ENCODE measurements at regions of chr14 and their contacts with region 1.

Region 1: DNA sequence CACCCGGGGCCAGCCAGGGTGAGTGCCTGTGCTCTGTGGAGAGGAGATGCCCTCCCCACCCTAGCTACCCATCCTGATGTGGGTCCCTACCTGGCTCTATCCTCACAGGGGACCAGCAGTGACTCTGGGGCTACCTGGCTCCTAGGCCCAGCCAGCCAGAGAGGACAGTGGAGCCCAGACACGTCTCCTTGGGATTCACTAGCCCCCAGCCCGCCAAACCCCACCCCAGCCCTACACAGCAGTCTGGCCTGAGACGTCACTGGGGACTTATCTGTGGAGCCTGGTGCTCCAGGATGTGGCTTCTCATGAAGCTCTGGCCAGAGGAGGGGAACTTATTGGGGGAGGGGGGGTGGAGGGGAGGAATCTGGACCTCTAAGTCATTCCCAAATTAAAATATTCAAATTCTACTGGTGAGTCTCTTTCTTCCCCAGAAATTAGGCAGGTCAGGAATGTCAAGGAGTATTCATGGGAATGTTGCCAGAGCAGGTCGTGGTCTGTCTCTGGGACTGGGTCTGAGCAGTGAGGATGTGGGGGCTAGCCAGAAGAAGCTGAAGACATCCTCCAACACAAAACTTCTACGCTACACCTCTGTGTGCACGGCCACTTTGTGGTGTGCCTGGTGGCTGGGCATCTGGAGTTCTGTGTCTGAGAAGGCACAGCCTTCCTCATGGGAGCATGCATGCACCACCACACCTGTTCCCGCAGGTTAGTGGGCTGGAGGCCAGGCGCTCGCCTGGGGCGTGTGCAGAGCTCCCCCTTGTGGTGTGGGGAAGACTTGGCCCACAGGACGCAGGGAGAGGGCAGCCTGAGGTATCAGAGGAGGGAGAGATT is 2.7 kb downstream of the CMTM5 start:
- DNase-seq: peak in 1 of 2 donors; percentile 84
- ATAC-seq: peak; percentile 66 to 87 (median 69)
- H3K4me3 ChIP-seq: no peak overlapping the region
- H3K4me3 Mint-ChIP-seq: no peak overlapping the region
- H3K27ac ChIP-seq: no peak overlapping the region
- H3K27ac Mint-ChIP-seq: no peak overlapping the region
- H3K4me1 ChIP-seq: no peaks in the 10 kb centered on the region
- H3K4me1 Mint-ChIP-seq: no peaks in the 10 kb centered on the region
- H3K27me3 ChIP-seq: no peaks in the 10 kb centered on the region
- H3K27me3 Mint-ChIP-seq: peaks cover 0 to 4% of the 10 kb centered on the region in 2 donors
- CTCF ChIP-seq: peak; percentile 66

Region 2: DNA sequence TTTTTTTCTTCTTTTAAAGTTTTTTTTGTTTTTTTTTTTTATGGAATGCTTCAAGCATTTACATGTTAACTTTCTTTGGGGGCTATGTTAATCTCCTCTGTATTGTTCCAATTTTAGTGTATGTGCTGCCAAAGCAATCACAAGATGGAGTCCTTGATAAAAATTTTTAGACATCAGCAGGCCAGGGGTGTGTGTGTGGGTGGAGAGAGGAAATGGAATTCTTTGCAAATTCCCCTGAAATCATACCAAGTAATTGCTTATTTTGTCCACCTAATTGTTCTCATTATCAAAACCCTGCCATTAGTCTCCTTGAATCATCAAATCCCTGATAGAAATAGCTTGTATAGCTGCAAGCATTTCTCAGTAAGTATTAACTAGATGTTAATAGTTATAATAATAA is 120.2 kb before region 1 on chr14:
- intact Hi-C with region 1: loop called (anchors 2 kb)
- DNase-seq: no peak
- ATAC-seq: no peak
- H3K4me3 ChIP-seq: no peak overlapping the region
- H3K4me3 Mint-ChIP-seq: no peak overlapping the region
- H3K27ac ChIP-seq: no peak overlapping the region
- H3K27ac Mint-ChIP-seq: no peak overlapping the region
- H3K4me1 ChIP-seq: no peaks in the 10 kb centered on the region
- H3K4me1 Mint-ChIP-seq: no peaks in the 10 kb centered on the region
- H3K27me3 ChIP-seq: peaks cover 9% of the 10 kb centered on the region
- H3K27me3 Mint-ChIP-seq: peaks cover 17 to 24% of the 10 kb centered on the region in 2 donors
- CTCF ChIP-seq: no peak

Measured in natural killer cell (primary cell).